Activated T-helper 2 cell treated with anti-CD3 and anti-CD28 coated beads, Interferon-gamma antibody, Interleukin-2, Interleukin-4, amounts not matched to agents 10 μg/mL and 5 μg/mL and 100 μg/mL, durations not matched to agents 14 hours and 24 hours and 36 hours (primary cell): ENCODE measurements at regions of chr11 and their contacts with region 1.

Region 1: DNA sequence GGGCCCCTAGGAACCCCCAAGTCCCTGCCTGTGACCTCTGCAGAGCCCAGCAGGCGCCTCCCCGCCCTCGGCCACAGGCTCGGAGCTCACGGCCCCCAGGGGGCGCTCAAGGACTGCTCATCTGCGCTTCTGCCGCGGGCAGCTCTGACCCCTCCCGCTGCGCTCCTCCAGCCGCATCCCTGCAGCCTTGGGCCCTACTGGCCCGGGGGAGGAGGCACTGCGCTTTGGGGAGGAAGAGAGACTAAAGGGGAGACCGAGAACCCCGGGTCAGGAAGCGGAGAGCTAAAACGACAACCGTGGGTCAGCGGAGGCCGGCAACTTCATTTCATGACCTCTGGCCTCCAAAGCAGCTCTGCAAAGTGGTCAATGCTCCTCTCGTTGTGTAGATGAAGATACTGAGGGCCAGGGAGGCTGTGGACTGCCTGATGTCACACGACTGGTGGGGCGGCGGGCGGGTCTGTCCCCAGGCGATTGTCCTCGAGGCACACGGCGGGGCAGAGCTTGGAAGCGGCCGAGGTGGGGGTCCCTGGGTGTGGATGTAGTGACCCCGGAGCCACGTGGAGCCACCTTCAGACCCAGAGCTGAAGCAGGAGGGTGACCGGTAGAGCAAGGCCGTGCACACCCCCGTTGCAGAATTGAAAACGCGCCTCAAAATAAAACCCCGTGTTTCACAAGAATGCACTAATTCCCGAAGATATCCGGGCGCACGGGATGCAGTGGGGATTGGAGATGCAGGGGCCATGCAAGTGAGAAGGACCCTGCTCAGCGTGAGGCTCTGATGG is 2.7 kb upstream of the KRTAP5-6 start:
- DNase-seq: peak; percentile 66
- H3K4me3 Mint-ChIP-seq: no peak overlapping the region
- H3K27ac Mint-ChIP-seq: no peak overlapping the region
- H3K4me1 Mint-ChIP-seq: peaks cover 2% of the 10 kb centered on the region
- H3K27me3 Mint-ChIP-seq: peaks cover 18% of the 10 kb centered on the region

Region 2: GRCh38 chr11:1619449-1619848 is 74.8 kb before region 1 on chr11:
- intact Hi-C with region 1: no loop called
- DNase-seq: no peak
- H3K4me3 Mint-ChIP-seq: no peak overlapping the region
- H3K27ac Mint-ChIP-seq: no peak overlapping the region
- H3K4me1 Mint-ChIP-seq: peaks cover 3% of the 10 kb centered on the region
- H3K27me3 Mint-ChIP-seq: peaks cover 3% of the 10 kb centered on the region

Region 3: DNA sequence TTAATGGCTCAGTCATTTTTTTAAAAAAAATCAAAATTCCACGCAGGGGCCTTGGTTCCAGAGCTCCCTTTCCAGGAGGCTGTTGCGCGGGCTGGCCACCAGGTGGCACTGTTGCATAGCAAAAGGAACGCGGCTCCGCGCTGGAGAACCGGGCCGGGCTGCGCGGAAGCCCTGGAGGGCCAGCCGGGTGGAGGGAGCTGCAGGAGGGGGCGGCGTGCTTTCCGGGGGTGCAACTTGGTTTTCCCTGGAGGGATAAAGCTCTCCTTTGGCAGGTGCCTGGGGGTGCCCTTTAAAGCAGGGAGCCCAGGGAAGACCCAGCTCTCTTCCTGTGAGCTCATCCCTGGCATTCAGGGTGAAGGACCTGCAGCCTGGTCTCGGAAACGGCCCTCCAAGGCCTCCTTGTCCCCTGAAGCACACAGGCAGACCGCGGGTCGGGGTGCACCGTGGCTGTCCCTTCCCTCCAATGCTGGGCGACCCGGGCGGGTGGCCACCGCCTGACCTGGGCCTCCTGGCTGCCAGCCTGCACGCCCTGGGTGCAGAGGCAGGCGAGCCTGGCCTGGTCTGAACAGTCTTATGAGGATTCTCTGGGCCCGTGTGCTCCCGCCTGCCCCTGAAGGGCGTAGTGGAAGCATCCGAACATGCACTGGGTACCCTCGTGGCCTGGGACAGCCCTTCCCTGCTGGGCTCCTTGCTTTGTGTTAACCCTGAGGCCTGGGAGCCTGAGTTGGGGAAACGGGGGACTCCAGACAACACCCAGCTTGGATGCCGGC is 41.3 kb before region 1 on chr11:
- intact Hi-C with region 1: loop called (anchors 5 kb)
- DNase-seq: peak; percentile 61
- H3K4me3 Mint-ChIP-seq: no peak overlapping the region
- H3K27ac Mint-ChIP-seq: no peak overlapping the region
- H3K4me1 Mint-ChIP-seq: no peaks in the 10 kb centered on the region
- H3K27me3 Mint-ChIP-seq: peaks cover 6% of the 10 kb centered on the region

Region 4: DNA sequence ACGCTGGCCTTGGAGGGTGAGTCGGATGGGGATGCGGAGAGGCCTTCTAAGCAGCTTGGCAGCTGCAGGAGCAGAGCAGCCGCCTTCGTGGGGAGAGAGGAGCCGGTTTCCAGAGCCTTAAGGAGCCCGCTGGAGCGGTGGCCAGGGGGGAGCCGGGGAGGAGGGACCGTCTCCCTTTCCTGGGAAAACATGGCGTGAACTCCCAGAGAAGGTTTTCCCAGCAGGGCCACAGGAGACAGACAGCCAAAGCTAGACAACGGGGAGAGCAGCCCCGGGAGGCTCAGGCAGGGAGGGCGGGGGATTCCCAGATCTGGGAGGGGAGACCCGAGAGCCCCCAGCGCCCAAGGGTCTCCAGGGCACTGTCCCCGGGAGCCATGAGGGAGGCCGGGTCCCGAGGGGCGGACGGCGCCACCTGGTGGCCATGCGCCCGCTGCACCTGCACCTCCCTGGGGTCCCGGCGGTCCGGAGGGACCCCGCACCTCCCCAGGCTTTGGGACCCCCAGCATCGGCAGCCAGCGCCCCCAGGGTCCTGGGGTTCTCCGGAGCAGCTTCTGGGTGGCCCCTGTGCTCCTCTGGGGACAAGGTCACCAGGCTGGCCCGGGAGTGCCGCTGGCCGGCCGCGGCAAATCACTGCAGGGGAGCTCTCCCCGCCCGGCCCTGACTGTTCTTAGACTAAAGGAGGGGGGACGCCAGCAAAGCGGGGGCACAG is 138.1 kb after region 1 on chr11:
- intact Hi-C with region 1: loop called (anchors 1 kb)
- DNase-seq: peak; percentile 42
- H3K4me3 Mint-ChIP-seq: no peak overlapping the region
- H3K27ac Mint-ChIP-seq: no peak overlapping the region
- H3K4me1 Mint-ChIP-seq: no peaks in the 10 kb centered on the region
- H3K27me3 Mint-ChIP-seq: peaks cover 2% of the 10 kb centered on the region

Region 5: GRCh38 chr11:2151500-2152257 is 457.4 kb after region 1 on chr11:
- intact Hi-C with region 1: loop called (anchors 10 kb)
- DNase-seq: peak; percentile 61
- H3K4me3 Mint-ChIP-seq: no peak overlapping the region
- H3K27ac Mint-ChIP-seq: no peak overlapping the region
- H3K4me1 Mint-ChIP-seq: peaks cover 13% of the 10 kb centered on the region
- H3K27me3 Mint-ChIP-seq: peaks cover 32% of the 10 kb centered on the region